K562 (cell line): ENCODE measurements at regions of chr12 and their contacts with region 1.

Region 1: GRCh38 chr12:54127538-54128259 is 61.1 kb downstream of the SMUG1 start:
- DNase-seq: no peak
- ATAC-seq: no peak
- H3K4me3 ChIP-seq: no peak overlapping the region
- H3K27ac ChIP-seq: no peak overlapping the region
- H3K4me1 ChIP-seq: peaks cover 0 to 17% of the 10 kb centered on the region in 2 experiments; a peak in 2 of 5 replicates
- H3K27me3 ChIP-seq: peaks cover 19 to 56% of the 10 kb centered on the region in 2 experiments; a peak in 4 of 5 replicates
- CTCF ChIP-seq: no peak
- EP300 ChIP-seq: no peak
- POLR2A ChIP-seq: no peak
- RAD21 ChIP-seq: no peak

Region 2: DNA sequence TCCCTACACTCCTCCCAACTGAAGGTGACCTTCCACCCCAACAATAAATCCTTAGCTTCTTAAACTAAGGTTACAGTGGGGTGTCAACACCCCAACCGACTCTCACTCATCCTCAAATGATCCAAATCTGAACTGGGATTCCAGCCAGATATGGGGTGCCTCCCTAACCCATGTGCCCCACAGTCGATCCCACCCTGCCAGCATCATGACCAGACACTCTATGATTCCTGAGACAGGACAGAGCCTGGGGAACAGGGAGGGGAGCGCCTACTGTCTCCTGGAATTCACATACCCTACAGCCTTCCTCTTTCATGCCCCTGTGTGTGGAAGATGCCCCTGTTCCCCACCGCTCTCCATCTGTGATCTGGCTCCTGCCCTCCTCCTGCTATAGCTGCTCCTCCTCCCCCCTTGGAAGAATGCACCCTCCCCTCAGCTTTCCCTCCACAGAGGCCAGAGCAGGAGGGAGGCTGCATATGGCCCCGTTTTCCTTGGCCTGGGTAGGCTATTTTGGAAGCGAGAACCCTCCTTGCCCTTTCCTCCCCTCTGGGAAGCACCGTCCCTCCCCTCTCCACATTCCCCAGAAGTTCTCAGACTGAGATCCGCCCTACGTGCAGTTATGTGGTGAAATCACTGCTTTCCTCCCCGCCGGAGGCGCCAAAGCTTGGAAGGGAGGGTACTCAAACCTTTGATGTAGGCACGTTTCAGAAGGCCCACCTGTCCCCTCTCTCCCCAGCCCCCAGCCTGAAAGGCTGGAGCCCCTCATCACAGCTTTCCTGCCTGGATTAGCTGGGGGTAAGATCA is 13.1 kb after region 1 on chr12:
- CTCF ChIA-PET with region 1: no interaction called
- POLR2A ChIA-PET with region 1: interaction called, 11 read pairs
- in situ Hi-C with region 1: no loop called
- intact Hi-C with region 1: no loop called
- DNase-seq: no peak
- ATAC-seq: no peak
- H3K4me3 ChIP-seq: no peak overlapping the region
- H3K27ac ChIP-seq: no peak overlapping the region
- H3K4me1 ChIP-seq: no peaks in the 10 kb centered on the region
- H3K27me3 ChIP-seq: peaks cover 7 to 59% of the 10 kb centered on the region in 2 experiments; a peak in 4 of 5 replicates
- CTCF ChIP-seq: no peak
- EP300 ChIP-seq: no peak
- POLR2A ChIP-seq: no peak
- RAD21 ChIP-seq: no peak

Region 3: GRCh38 chr12:54229624-54230212 is 102.0 kb after region 1 on chr12:
- CTCF ChIA-PET with region 1: no interaction called
- POLR2A ChIA-PET with region 1: no interaction called
- in situ Hi-C with region 1: no loop called
- intact Hi-C with region 1: no loop called
- DNase-seq: no peak
- ATAC-seq: no peak
- H3K4me3 ChIP-seq: no peak overlapping the region
- H3K27ac ChIP-seq: 0 out of 3 replicates have a peak overlapping the region, but pooled peaks have one; percentile 2
- H3K4me1 ChIP-seq: peaks cover 9 to 19% of the 10 kb centered on the region in 2 experiments; a peak in 4 of 5 replicates
- H3K27me3 ChIP-seq: no peaks in the 10 kb centered on the region
- CTCF ChIP-seq: no peak
- EP300 ChIP-seq: no peak
- POLR2A ChIP-seq: no peak
- RAD21 ChIP-seq: no peak